AG04449 (cell line): ENCODE measurements at regions of chr7 and their contacts with region 1.

Region 1: GRCh38 chr7:92621026-92621540 is 30.9 kb upstream of the FAM133B start:
- DNase-seq: peak; percentile 74
- H3K4me3 ChIP-seq: no peak overlapping the region
- CTCF ChIP-seq: peak; percentile 62

Region 2: DNA sequence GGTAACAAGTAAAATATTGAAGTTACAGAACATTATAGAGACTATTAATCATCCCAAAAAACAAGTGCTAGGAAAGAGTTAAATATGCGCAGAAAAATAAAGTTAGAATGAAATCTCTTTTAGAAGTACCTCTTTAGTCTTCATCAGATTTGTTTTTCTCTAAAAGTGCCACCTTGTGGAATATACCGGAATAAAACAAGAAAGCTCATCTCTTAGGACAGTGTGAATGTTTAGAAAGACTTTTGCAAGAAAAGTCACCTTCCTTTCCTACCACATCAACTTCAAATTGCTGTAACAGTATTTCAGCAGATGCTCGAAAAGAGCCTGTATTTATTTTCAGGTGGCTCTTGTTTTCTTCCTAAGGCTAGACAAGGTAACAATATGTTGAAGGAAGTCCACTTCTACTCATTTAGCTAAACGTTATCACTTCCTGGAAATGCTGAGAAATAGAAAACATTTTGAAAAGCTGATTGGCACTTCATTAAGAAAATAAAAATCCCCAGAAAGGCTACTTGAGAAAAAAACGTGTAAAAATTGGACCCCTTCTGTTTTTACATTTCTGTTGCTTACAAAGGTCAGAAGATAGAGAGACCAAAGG is 11.1 kb before region 1 on chr7:
- CTCF ChIA-PET with region 1: interaction called, 24 read pairs
- POLR2A ChIA-PET with region 1: no interaction called
- DNase-seq: no peak
- H3K4me3 ChIP-seq: no peak overlapping the region
- CTCF ChIP-seq: no peak

Region 3: GRCh38 chr7:92633211-92633906 is 12.3 kb after region 1 on chr7:
- CTCF ChIA-PET with region 1: interaction called, 38 read pairs
- POLR2A ChIA-PET with region 1: no interaction called
- DNase-seq: peak; percentile 41
- H3K4me3 ChIP-seq: no peak overlapping the region
- CTCF ChIP-seq: no peak

Region 4: DNA sequence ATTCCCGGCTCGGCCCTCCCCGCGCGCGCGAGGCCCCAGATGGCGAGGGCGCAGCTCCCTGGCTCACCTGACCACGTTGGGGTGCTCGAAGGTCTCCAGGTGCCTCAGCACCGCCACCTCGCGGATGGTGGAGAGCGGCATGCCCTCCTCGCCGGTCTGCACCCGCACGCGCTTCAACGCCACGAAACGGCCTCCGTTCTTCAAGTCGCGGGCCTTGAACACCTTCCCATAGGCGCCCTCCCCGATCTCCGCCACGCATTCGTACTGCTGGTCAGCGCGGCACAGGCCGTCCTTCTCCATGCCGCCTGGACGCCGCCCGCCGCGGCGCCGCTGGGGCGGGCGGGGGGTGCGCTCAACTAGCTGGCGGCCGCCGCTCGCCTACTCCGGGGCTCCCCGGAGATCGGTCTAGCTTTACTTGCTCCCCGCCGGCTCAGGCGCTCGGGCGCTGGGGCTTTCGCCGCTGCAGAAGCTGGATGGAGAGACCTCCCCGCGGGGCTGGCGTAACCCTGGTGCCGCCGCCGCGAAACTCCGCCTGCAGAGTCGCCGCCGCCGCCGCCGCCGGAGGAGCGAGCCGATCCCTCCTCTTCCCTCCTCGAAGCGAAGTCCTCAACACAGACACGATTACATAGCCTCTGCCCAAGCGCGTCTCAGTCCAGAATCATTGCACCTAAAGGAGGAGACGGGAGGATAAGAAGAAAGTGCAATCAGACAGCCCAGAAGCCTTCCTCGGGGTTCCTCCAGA is 212.1 kb after region 1 on chr7:
- CTCF ChIA-PET with region 1: interaction called, 22 read pairs
- POLR2A ChIA-PET with region 1: interaction called, 3 read pairs
- DNase-seq: no peak
- H3K4me3 ChIP-seq: peak overlapping the region; percentile 85
- CTCF ChIP-seq: peak; percentile 90